A549 (cell line): ENCODE measurements at regions of chr3 and their contacts with region 1.

Region 1: DNA sequence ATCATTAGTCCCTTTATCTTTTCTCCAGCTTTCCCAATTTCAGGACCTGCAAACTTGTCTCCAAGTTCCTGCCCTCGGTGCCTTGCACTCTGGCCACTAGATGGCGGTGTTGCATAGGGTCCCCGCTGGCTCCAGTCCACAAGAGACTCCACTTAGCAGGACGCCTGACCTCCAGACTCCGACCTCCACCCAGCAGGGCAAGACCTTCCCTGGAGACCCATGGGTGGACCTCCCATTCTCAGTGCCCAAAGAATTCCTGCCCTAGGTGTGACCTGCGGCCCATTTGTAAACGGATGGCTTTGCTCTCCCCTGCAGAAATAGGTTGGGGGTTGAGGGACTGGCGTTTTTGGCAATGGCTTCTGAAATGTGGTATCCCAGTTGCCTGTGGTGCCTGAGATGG is 82.6 kb downstream of the LSM3 start:
- DNase-seq: peak; percentile 87 to 90
- ATAC-seq: peak; percentile 80 to 90
- H3K4me3 ChIP-seq: no peak overlapping the region
- H3K27ac ChIP-seq: no peak overlapping the region
- H3K4me1 ChIP-seq: peaks cover 13% of the 10 kb centered on the region
- CTCF ChIP-seq: peak; percentile 95
- EP300 ChIP-seq: no peak
- POLR2A ChIP-seq: no peak
- RAD21 ChIP-seq: peak; percentile 98 to 99

Region 2: GRCh38 chr3:14289590-14290461 is 28.6 kb after region 1 on chr3:
- CTCF ChIA-PET with region 1: interaction called, 14 read pairs
- POLR2A ChIA-PET with region 1: no interaction called
- DNase-seq: peak; percentile 44 to 60
- ATAC-seq: peak; percentile 77 to 80
- H3K4me3 ChIP-seq: no peak overlapping the region
- H3K27ac ChIP-seq: peak overlapping the region; percentile 23 to 58; a peak in 2 of 6 replicates
- H3K4me1 ChIP-seq: peaks cover 18% of the 10 kb centered on the region
- CTCF ChIP-seq: no peak
- EP300 ChIP-seq: no peak
- POLR2A ChIP-seq: no peak
- RAD21 ChIP-seq: no peak

Region 3: DNA sequence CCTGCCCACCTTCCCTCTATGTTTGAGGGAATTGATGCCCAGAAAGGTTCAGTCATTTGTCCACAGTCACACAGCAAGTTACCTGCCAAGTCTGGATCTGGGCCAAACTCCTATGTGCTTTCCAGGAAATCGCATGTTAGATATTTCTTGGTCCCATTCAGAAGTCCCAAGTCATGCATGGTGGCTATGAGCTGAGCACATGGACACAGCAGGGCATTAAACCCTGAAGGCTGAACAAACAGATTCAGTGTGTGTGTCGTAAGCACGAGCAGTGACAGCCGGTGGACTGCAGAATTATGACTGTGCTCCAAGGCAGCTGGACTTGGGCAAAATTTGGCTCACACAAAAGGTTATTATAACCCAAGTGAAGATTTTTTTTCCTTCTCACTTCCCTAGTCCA is 129.8 kb after region 1 on chr3:
- CTCF ChIA-PET with region 1: interaction called, 13 read pairs
- POLR2A ChIA-PET with region 1: no interaction called
- DNase-seq: peak in 1 of 2 experiments; percentile 70
- ATAC-seq: peak; percentile 73 to 86
- H3K4me3 ChIP-seq: no peak overlapping the region
- H3K27ac ChIP-seq: peak overlapping the region; percentile 18 to 32; a peak in 4 of 6 replicates
- H3K4me1 ChIP-seq: peaks cover 14% of the 10 kb centered on the region
- CTCF ChIP-seq: no peak
- EP300 ChIP-seq: no peak
- POLR2A ChIP-seq: no peak
- RAD21 ChIP-seq: no peak

Region 4: DNA sequence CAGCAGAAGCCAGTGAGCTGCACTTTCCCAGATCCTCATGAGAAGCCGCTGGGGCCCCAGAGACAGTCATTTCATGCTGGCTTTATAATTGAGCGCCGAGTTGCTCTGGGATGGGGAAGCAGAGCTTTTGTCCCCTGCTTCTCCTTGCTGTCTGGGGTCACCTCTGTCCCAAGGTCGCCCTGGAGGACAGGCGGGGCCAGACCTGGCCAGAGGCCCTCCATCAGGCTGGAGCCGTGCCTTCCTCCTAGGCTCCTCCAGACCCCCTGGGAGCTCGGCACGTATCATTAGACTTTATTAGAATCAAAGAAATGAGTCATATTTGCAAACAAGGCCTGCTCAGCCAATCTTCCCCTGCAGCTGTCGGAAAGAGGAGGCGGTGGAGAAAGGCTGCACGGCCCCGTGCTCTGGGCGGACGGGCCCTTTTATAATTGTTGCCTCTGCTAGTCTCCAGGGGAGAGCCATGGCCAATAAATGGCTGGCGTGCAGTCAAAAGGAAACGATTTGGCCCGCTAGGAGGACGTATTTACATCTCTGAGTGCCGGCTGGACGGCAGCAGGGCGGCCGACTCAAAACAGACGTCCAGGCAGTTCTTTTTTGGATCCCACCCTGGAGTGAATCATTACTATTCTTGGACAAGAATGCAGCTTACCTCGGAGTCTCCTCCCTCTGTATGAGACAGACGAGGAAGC is 191.6 kb after region 1 on chr3:
- CTCF ChIA-PET with region 1: interaction called, 173 read pairs
- POLR2A ChIA-PET with region 1: no interaction called
- DNase-seq: peak; percentile 83 to 88
- ATAC-seq: peak; percentile 69 to 78
- H3K4me3 ChIP-seq: peak overlapping the region; percentile 32; the same call in 1 of the 3 replicates
- H3K27ac ChIP-seq: peak overlapping the region; percentile 90 to 97
- H3K4me1 ChIP-seq: peaks cover 59% of the 10 kb centered on the region
- CTCF ChIP-seq: no peak
- EP300 ChIP-seq: peak; percentile 4 to 59; a peak in 2 of 5 replicates
- POLR2A ChIP-seq: no peak
- RAD21 ChIP-seq: peak in 1 of 2 experiments; percentile 33; a peak in 2 of 5 replicates

Region 5: DNA sequence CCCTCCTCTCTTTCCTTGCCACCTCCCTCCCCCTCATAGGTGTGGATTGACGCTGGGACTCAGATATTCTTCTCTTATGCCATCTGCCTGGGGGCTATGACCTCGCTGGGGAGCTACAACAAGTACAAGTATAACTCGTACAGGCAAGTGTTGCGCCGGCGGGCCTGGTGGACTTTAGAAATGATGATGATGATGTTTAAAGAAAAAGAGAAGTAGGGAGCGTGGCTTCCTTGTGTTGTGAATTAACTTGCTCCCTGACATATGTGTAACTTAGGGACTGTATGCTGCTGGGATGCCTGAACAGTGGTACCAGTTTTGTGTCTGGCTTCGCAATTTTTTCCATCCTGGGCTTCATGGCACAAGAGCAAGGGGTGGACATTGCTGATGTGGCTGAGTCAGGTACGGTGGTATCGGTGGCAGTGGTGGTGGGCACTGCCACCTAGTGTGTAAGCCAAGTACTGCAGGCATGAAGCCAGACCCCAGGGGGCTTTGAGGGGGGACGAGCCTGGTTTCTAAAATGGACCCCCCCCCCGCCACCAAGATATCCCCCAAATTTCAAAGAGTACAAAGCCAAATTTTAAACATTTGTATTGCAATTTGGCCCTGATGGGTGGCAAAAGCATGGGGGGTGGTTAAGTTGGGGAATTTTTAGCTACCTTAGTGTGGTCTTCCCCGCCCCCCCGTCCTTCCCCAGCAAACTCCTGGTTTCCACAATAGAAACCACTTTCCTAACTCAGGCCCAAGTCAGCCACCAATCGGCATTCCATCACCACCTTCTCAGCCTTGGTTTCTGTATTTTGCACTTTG is 206.8 kb after region 1 on chr3:
- CTCF ChIA-PET with region 1: interaction called, 173 read pairs
- POLR2A ChIA-PET with region 1: no interaction called
- DNase-seq: peak; percentile 51 to 91
- ATAC-seq: peak; percentile 51 to 68; a peak in 5 of 6 replicates
- H3K4me3 ChIP-seq: no peak overlapping the region
- H3K27ac ChIP-seq: no peak overlapping the region
- H3K4me1 ChIP-seq: peaks cover 24% of the 10 kb centered on the region
- CTCF ChIP-seq: peak; percentile 74
- EP300 ChIP-seq: no peak
- POLR2A ChIP-seq: no peak
- RAD21 ChIP-seq: peak; percentile 85 to 88

Region 6: GRCh38 chr3:14508961-14509795 is 247.9 kb after region 1 on chr3:
- CTCF ChIA-PET with region 1: interaction called, 16 read pairs
- POLR2A ChIA-PET with region 1: no interaction called
- DNase-seq: peak; percentile 48 to 81
- ATAC-seq: peak; percentile 69 to 87
- H3K4me3 ChIP-seq: no peak overlapping the region
- H3K27ac ChIP-seq: peak overlapping the region in 1 of 2 experiments; percentile 31; a peak in 1 of 6 replicates
- H3K4me1 ChIP-seq: no peaks in the 10 kb centered on the region
- CTCF ChIP-seq: peak; percentile 92
- EP300 ChIP-seq: no peak
- POLR2A ChIP-seq: no peak
- RAD21 ChIP-seq: peak; percentile 80 to 91